Activated CD8-positive, alpha-beta T cell treated with anti-CD3 and anti-CD28 coated beads for 36 hours (primary cell): ENCODE measurements at regions of chr4 and their contacts with region 1.

Region 1: GRCh38 chr4:38856524-38857337 is at the start of gene TLR6:
- DNase-seq: peak; percentile 87
- ATAC-seq: peak; percentile 64
- H3K4me3 Mint-ChIP-seq: peak within 1 kb of the TSS; percentile 79
- H3K27ac Mint-ChIP-seq: peak within 1 kb of the TSS; percentile 80
- H3K4me1 Mint-ChIP-seq: peaks cover 28% of the 10 kb centered on the region
- H3K27me3 Mint-ChIP-seq: peaks cover 2% of the 10 kb centered on the region
- CTCF ChIP-seq: peak; percentile 87
- total RNA-seq, gene TLR6: 1.6 to 2.0 TPM

Region 2: DNA sequence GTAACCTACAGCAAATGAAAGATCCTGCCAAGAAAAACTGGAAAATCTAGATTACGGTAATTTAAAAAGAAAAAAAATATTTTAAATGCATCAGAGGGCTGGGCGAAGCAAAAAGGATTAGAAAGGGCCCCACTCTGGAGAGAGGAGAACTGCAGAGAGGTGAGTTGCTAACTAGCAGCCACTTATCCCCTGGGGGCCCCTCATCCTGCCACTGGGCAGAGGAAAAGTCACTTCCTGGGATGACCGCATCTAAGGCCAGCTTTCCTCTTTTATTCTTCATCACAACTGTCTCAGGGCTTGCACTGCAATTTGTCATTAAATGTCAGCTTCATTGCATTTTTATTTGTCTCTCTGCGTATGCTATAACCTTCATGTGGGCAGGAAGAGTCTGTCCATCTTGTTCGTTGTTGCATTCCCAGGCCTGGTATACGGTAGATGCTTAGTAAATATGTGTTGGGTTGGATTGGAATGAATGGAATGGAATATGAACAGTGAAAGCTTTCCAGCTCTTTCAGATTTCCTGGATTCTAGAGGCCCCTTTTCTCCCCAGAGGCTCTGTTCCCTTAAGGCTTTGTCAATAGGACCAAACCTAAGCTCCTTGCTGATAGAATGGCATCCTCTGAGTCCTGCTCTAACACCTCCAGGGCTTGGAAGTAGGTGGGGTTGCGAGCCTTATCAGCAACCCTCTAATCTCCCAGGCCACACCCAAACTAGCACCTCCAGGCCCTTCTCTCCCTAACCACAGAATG is 132.8 kb before region 1 on chr4:
- CTCF ChIA-PET with region 1: no interaction called
- POLR2A ChIA-PET with region 1: no interaction called
- intact Hi-C with region 1: no loop called
- DNase-seq: no peak
- ATAC-seq: no peak
- H3K4me3 Mint-ChIP-seq: no peak overlapping the region
- H3K27ac Mint-ChIP-seq: no peak overlapping the region
- H3K4me1 Mint-ChIP-seq: peaks cover 4% of the 10 kb centered on the region
- H3K27me3 Mint-ChIP-seq: peaks cover 2% of the 10 kb centered on the region
- CTCF ChIP-seq: no peak

Region 3: GRCh38 chr4:38768968-38769394 is 87.8 kb before region 1 on chr4:
- CTCF ChIA-PET with region 1: interaction called, 20 read pairs
- POLR2A ChIA-PET with region 1: no interaction called
- intact Hi-C with region 1: no loop called
- DNase-seq: no peak
- ATAC-seq: no peak
- H3K4me3 Mint-ChIP-seq: no peak overlapping the region
- H3K27ac Mint-ChIP-seq: no peak overlapping the region
- H3K4me1 Mint-ChIP-seq: no peaks in the 10 kb centered on the region
- H3K27me3 Mint-ChIP-seq: peaks cover 3% of the 10 kb centered on the region
- CTCF ChIP-seq: no peak

Region 4: DNA sequence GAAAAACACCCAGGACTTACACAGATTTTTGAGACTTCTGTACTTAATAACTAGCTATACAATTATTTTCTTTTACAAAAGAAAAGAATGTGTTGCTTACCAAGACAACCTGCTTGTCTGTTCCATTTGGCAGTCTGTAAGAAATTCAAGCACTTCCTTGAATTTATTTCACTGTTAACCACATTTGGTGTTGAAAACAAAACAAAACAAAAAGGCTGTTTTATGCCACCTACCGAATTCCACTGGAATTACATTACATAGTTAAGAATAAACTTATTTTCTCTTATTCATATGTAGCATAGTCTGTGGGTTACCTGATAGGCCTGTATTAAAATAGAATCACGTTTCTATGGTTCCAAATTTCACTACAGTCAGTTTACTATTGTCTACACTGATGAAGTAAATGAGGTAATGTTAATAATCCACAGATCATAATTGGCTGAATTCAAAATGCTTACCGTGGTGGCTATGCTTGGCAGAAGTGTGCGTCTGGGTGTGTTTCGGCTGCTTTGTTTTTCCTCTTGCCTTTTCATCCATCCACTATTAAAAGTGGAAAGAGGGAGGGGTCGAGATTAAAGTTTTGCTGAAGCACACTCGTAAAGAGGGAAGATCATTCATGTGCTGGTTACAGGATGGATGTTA is 52.0 kb before region 1 on chr4 and contains the start of gene TLR1:
- CTCF ChIA-PET with region 1: interaction called, 29 read pairs
- POLR2A ChIA-PET with region 1: no interaction called
- intact Hi-C with region 1: no loop called
- DNase-seq: no peak
- ATAC-seq: peak; percentile 82
- H3K4me3 Mint-ChIP-seq: peak within 1 kb of the TSS; percentile 64
- H3K27ac Mint-ChIP-seq: peak within 1 kb of the TSS; percentile 88
- H3K4me1 Mint-ChIP-seq: peaks cover 19% of the 10 kb centered on the region
- H3K27me3 Mint-ChIP-seq: no peaks in the 10 kb centered on the region
- CTCF ChIP-seq: peak; percentile 77
- total RNA-seq, gene TLR1: 1.5 to 1.9 TPM

Region 5: GRCh38 chr4:38842994-38843393 is 13.7 kb before region 1 on chr4:
- CTCF ChIA-PET with region 1: interaction called, 14 read pairs
- POLR2A ChIA-PET with region 1: interaction called, 5 read pairs
- intact Hi-C with region 1: no loop called
- DNase-seq: no peak
- ATAC-seq: no peak
- H3K4me3 Mint-ChIP-seq: no peak overlapping the region
- H3K27ac Mint-ChIP-seq: no peak overlapping the region
- H3K4me1 Mint-ChIP-seq: peaks cover 7% of the 10 kb centered on the region
- H3K27me3 Mint-ChIP-seq: no peaks in the 10 kb centered on the region
- CTCF ChIP-seq: no peak

Region 6: DNA sequence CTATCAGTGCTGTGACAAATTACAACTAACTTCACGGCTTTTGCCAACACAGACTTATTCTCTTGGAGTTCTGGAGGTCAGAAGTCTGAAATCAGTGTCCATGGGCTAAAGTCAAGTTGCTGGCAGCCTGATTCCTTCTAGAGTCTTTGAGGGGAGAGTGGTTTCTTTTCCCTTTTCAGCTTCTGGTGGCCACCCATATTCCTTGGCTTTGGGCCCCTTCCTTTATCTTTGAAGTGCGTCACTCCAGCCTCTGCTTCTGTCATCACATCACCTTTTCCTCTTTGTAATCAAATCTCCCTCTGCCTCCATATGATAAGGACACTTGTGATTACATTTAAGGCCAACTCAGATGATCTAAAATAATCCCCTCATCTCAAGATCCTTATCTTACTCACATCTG is 19.9 kb after region 1 on chr4:
- CTCF ChIA-PET with region 1: interaction called, 47 read pairs
- POLR2A ChIA-PET with region 1: interaction called, 4 read pairs
- intact Hi-C with region 1: no loop called
- DNase-seq: no peak
- ATAC-seq: no peak
- H3K4me3 Mint-ChIP-seq: no peak overlapping the region
- H3K27ac Mint-ChIP-seq: no peak overlapping the region
- H3K4me1 Mint-ChIP-seq: no peaks in the 10 kb centered on the region
- H3K27me3 Mint-ChIP-seq: no peaks in the 10 kb centered on the region
- CTCF ChIP-seq: no peak